Heart left ventricle (tissue), 16 donors: ENCODE measurements at regions of chr7 and their contacts with region 1.

Region 1: DNA sequence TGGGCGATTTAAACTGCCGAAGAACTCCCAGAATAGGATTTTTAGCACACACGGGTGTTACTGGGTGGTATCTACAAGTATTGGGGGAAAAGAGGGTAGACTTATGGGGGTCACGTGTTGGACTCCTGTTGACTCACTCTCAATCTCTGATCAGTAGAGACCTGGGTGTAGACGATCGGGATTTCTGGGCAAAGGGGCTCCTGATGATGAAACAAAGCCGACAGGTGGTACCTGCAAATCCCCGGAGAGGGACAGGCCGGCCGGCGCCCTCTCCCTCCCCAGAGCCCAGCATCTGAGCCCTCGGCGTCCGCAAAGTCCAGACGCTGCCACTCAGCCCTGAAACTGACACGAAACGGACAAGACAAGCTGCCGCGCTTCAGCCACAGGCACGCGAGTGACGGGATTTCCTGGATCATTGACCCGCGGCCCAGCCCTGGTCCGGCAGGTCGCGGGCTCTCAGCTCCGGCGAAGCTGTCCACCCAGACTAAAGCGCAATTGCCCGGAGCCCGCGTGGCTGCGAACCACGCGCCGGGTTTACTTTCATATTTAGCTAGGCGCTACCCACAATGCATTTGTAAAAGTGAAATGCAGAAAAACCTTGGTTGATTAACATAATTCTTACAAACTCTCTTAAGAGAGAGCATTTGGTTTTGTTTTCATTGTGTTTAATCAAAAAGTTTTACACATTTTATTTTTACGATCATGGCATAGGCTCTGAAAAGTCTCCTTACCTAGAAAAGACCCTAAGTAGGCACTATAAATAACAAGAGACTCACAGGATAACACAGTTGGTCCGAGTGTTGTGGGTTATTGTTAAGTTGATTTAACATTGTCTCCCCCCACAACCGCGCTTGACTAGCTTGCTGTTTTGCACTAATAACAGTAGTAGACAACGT is 56.9 kb upstream of the EZH2 start:
- DNase-seq: peak; percentile 79 to 90 (median 86)
- ATAC-seq: peak; percentile 88 to 98 (median 96)
- H3K4me3 ChIP-seq: peak overlapping the region; percentile 50 to 83 (median 72)
- H3K27ac ChIP-seq: peak overlapping the region; percentile 7 to 94 (median 74)
- H3K4me1 ChIP-seq: peaks cover 0 to 16% (median 5%) of the 10 kb centered on the region in 12 donors
- H3K27me3 ChIP-seq: no peaks in the 10 kb centered on the region
- CTCF ChIP-seq: peak in 1 of 12 donors; percentile 15
- POLR2A ChIP-seq: peak in 1 of 2 donors; percentile 42

Region 2: GRCh38 chr7:148898845-148899484 is 42.0 kb before region 1 on chr7:
- intact Hi-C with region 1: no loop called
- DNase-seq: no peak
- ATAC-seq: no peak
- H3K4me3 ChIP-seq: no peak overlapping the region
- H3K27ac ChIP-seq: no peak overlapping the region
- H3K4me1 ChIP-seq: no peaks in the 10 kb centered on the region
- H3K27me3 ChIP-seq: peaks cover 0 to 25% (median 0%) of the 10 kb centered on the region in 9 donors
- CTCF ChIP-seq: no peak
- POLR2A ChIP-seq: no peak

Region 3: GRCh38 chr7:148987010-148987750 is 46.2 kb after region 1 on chr7:
- intact Hi-C with region 1: loop called in 1 of 10 experiments (anchors 1 kb)
- DNase-seq: peak; percentile 77 to 85 (median 81)
- ATAC-seq: peak; percentile 92
- H3K4me3 ChIP-seq: peak overlapping the region; percentile 56 to 84 (median 71)
- H3K27ac ChIP-seq: peak overlapping the region; percentile 53 to 92 (median 77)
- H3K4me1 ChIP-seq: peaks cover 4 to 53% (median 25%) of the 10 kb centered on the region in 12 donors
- H3K27me3 ChIP-seq: no peaks in the 10 kb centered on the region
- CTCF ChIP-seq: no peak
- POLR2A ChIP-seq: peak in 1 of 2 donors; percentile 37

Region 4: DNA sequence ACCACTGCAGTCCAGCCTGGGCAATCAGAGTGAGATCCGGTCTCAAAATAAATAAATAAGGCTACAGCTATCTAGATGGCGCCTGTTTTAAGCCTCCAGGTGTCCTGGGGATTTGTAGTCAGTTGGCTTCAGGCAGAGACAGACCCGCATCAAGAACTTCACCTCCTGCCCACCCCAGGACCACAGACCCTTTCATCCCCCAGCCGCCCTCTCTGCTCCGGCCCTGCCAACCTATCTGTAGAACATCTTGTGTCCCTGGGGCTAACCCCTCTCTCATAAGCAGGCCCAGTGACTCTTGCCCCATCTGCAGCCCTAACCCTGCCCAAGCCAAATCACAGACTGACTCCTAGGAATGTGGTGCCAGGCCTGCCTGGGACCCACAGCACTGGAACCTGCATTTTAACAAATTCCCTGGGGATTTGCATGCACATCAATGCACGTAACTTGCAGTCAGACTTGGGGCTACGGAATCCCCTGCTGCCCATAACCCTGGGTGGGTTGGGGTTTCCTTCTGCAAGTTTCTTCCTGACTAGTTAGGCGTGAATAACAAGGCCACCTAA is 69.6 kb after region 1 on chr7:
- intact Hi-C with region 1: no loop called
- DNase-seq: no peak
- ATAC-seq: no peak
- H3K4me3 ChIP-seq: no peak overlapping the region
- H3K27ac ChIP-seq: no peak overlapping the region
- H3K4me1 ChIP-seq: no peaks in the 10 kb centered on the region
- H3K27me3 ChIP-seq: no peaks in the 10 kb centered on the region
- CTCF ChIP-seq: no peak
- POLR2A ChIP-seq: no peak